Psoas muscle (tissue), 8 donors: ENCODE measurements at regions of chr1 and their contacts with region 1.

Region 1: GRCh38 chr1:165257969-165258459 is 98.5 kb downstream of the LMX1A start:
- DNase-seq: peak; percentile 72 to 85
- ATAC-seq: peak; percentile 75 to 95 (median 87)
- H3K4me3 ChIP-seq: no peak overlapping the region
- H3K27ac ChIP-seq: no peak overlapping the region
- H3K4me1 ChIP-seq: peaks cover 9% of the 10 kb centered on the region
- H3K27me3 ChIP-seq: peaks cover 0 to 1% (median 0%) of the 10 kb centered on the region in 3 donors
- CTCF ChIP-seq: peak; percentile 78

Region 2: DNA sequence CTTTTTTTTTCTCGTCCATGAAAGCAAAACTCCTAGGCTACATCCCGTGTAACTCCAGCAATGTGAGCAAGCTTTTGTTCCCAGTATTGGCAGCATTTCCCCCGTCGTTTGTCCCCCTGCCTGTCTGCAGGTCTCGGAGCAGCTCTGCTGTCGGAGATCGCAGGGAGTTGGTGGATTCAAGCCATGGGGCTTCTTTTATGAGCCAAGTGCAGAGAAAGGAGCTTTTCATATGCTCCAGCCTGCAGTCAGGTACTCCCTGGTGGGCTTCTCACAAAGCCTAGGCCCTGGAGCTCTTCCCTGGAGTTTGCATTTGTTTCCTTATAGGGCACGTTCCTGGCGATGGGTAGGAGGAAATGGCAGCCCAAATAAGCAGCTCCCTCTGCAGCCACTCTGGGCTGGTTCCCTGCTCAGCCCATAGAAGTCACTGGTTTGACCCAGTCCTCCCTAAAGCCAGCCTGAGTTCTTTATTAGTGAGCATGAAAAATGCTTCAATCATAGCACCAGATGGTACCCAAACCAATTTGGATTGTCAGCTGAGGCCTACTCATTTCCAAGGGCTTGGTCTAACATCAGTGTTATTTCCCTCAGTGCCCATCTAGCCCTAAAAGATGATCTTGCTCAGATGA is 1857.9 kb before region 1 on chr1:
- intact Hi-C with region 1: loop called in 1 of 2 experiments (anchors 10 kb)
- DNase-seq: no peak
- ATAC-seq: no peak
- H3K4me3 ChIP-seq: no peak overlapping the region
- H3K27ac ChIP-seq: no peak overlapping the region
- H3K4me1 ChIP-seq: no peaks in the 10 kb centered on the region
- H3K27me3 ChIP-seq: peaks cover 0 to 3% (median 0%) of the 10 kb centered on the region in 3 donors
- CTCF ChIP-seq: no peak

Region 3: GRCh38 chr1:165218731-165219130 is 39.3 kb before region 1 on chr1:
- intact Hi-C with region 1: no loop called
- DNase-seq: no peak
- ATAC-seq: no peak
- H3K4me3 ChIP-seq: no peak overlapping the region
- H3K27ac ChIP-seq: no peak overlapping the region
- H3K4me1 ChIP-seq: no peaks in the 10 kb centered on the region
- H3K27me3 ChIP-seq: no peaks in the 10 kb centered on the region
- CTCF ChIP-seq: no peak

Region 4: DNA sequence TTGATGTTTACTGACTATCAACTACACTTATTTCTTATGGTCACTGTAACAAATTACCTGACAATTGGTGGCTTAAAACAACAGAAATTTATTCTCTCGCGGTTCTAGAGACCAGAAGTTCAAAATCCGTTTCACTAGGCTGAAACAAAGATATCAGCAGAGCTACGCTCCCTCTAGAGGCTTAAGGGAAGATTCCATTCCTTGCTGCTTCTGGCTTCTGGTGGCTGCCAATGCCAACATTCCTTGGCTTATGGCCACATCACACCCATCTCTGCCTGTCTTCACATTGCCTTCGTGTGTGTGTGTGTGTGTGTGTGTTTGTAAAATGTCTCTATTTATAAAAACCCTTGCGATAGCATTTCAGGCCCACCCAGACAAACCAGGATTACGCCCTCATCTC is 32.1 kb after region 1 on chr1:
- intact Hi-C with region 1: loop called in 1 of 2 experiments (anchors 5 kb)
- DNase-seq: no peak
- ATAC-seq: peak; percentile 28 to 83 (median 66)
- H3K4me3 ChIP-seq: no peak overlapping the region
- H3K27ac ChIP-seq: no peak overlapping the region
- H3K4me1 ChIP-seq: no peaks in the 10 kb centered on the region
- H3K27me3 ChIP-seq: peaks cover 0 to 10% (median 1%) of the 10 kb centered on the region in 3 donors
- CTCF ChIP-seq: peak; percentile 29

Region 5: GRCh38 chr1:165303386-165303785 is 45.4 kb after region 1 on chr1:
- intact Hi-C with region 1: no loop called
- DNase-seq: peak; percentile 48 to 77
- ATAC-seq: peak in 1 of 4 donors; percentile 47
- H3K4me3 ChIP-seq: no peak overlapping the region
- H3K27ac ChIP-seq: no peak overlapping the region
- H3K4me1 ChIP-seq: no peaks in the 10 kb centered on the region
- H3K27me3 ChIP-seq: peaks cover 0 to 10% (median 0%) of the 10 kb centered on the region in 3 donors
- CTCF ChIP-seq: no peak

Region 6: DNA sequence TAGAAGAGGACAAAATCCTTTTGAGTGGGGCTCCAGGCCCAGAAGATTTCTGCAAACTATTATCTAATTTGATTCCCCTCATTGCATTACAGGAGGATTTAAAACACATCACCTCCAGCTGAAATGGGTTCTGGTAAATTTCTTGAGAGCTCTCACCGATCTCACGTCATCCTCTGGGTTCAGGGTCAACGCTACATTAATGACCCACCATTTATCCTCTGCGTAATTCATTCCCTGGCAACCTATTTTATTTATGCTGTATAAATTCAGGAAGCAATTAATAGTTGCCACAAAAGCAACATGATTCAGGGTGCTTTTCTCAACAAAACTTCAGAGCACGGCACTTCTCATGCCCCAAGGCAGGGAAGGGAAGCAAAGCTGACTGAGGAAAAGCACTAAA is 59.6 kb after region 1 on chr1:
- intact Hi-C with region 1: loop called in 1 of 2 experiments (anchors 10 kb)
- DNase-seq: no peak
- ATAC-seq: no peak
- H3K4me3 ChIP-seq: no peak overlapping the region
- H3K27ac ChIP-seq: no peak overlapping the region
- H3K4me1 ChIP-seq: no peaks in the 10 kb centered on the region
- H3K27me3 ChIP-seq: peaks cover 0 to 26% (median 5%) of the 10 kb centered on the region in 3 donors
- CTCF ChIP-seq: no peak

Region 7: DNA sequence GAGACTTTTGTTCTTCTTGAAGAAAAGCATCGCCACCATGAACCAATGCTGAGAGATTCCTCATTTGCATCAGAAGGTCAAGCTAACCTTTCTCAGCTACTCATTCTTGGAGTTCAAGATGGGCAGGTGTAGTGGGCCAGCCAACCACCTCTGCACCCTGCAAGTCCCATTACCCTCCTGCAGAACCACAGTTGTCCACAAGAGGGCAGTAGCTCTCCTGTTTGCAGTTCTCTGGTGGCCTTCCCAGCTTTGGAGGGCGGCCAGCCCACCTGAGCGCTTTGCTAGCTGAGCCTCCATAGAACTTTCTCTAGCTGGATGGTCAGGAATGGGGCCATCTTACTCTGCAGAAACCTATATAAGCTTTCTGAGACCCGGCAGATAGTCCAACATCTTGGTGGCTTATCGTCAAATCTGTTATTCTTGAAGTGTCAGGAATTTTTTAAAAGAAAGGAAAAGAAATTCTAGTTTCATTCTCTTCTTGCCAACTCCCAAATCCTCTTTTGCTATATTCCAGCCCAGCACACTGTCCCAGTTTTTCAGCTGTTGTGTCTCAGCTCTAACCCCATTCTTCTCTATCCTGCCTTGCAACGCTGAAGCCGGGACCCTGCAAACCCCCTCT is 109.5 kb after region 1 on chr1:
- intact Hi-C with region 1: loop called (anchors 2 kb)
- DNase-seq: peak; percentile 79 to 86
- ATAC-seq: peak; percentile 33 to 66 (median 48)
- H3K4me3 ChIP-seq: no peak overlapping the region
- H3K27ac ChIP-seq: no peak overlapping the region
- H3K4me1 ChIP-seq: no peaks in the 10 kb centered on the region
- H3K27me3 ChIP-seq: no peaks in the 10 kb centered on the region
- CTCF ChIP-seq: peak; percentile 96

Region 8: GRCh38 chr1:165549973-165550372 is 292.0 kb after region 1 on chr1:
- intact Hi-C with region 1: no loop called
- DNase-seq: no peak
- ATAC-seq: no peak
- H3K4me3 ChIP-seq: no peak overlapping the region
- H3K27ac ChIP-seq: no peak overlapping the region
- H3K4me1 ChIP-seq: no peaks in the 10 kb centered on the region
- H3K27me3 ChIP-seq: no peaks in the 10 kb centered on the region
- CTCF ChIP-seq: no peak

Region 9: GRCh38 chr1:165592945-165593823 is 335.2 kb after region 1 on chr1:
- intact Hi-C with region 1: loop called in 1 of 2 experiments (anchors 5 kb)
- DNase-seq: peak; percentile 30 to 61
- ATAC-seq: peak; percentile 52 to 76 (median 66)
- H3K4me3 ChIP-seq: no peak overlapping the region
- H3K27ac ChIP-seq: no peak overlapping the region
- H3K4me1 ChIP-seq: no peaks in the 10 kb centered on the region
- H3K27me3 ChIP-seq: no peaks in the 10 kb centered on the region
- CTCF ChIP-seq: peak; percentile 98